ENCODE measurements at regions of chr1 and their contacts with region 1.

Region 1: GRCh38 chr1:204989266-204990058 is 53.5 kb upstream of the CNTN2 start:
- DNase-seq: peak; percentile 85
- ATAC-seq: peak; percentile 87
- H3K4me3 Mint-ChIP-seq: no peak overlapping the region
- H3K27ac Mint-ChIP-seq: no peak overlapping the region
- H3K4me1 Mint-ChIP-seq: peaks cover 35% of the 10 kb centered on the region
- H3K27me3 Mint-ChIP-seq: peaks cover 20% of the 10 kb centered on the region
- CTCF ChIP-seq: peak; percentile 95

Region 2: GRCh38 chr1:204751894-204752687 is 237.4 kb before region 1 on chr1:
- CTCF ChIA-PET with region 1: no interaction called
- POLR2A ChIA-PET with region 1: no interaction called
- DNase-seq: peak; percentile 73
- ATAC-seq: peak; percentile 85
- H3K4me3 Mint-ChIP-seq: 0 out of 2 replicates have a peak overlapping the region, but pooled peaks have one; percentile 25
- H3K27ac Mint-ChIP-seq: no peak overlapping the region
- H3K4me1 Mint-ChIP-seq: peaks cover 24% of the 10 kb centered on the region
- H3K27me3 Mint-ChIP-seq: peaks cover 12% of the 10 kb centered on the region
- CTCF ChIP-seq: no peak

Region 3: DNA sequence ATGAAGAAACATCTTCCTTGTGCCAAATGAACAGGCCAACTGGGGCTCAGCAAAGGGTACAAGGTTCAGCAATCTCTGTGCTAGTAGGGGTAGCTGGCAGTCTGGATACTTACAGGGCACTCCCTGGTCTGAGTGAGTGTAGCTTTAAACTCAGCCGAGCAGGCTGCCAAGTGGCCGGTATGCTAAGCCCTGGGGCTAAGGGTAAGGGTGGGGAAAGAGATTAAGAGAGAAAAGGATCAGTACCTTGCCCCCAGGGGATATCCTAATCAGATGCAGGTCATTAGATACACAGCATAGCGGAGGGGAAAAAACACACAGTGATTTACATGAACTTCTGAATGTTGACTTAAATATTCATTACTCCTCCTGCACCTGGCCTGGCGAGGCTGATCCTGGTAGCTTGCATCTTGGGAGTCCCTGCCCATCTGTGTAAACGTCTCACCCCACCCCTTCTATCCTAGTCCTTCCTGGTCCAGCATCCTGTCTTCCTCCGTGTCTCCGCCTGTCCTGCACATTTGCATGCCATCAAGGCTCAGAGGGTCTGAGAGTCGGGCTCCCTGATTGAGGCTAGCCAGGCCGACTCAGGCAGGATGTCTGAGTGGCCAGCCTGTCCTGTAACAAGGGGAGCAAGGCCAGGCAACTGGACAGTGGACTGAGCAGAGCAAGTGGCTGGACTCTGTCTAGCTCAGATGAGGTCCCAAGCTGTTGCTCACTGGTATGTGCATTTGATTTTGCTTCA is 14.1 kb after region 1 on chr1:
- CTCF ChIA-PET with region 1: interaction called, 20 read pairs
- POLR2A ChIA-PET with region 1: no interaction called
- DNase-seq: no peak
- ATAC-seq: peak; percentile 70
- H3K4me3 Mint-ChIP-seq: no peak overlapping the region
- H3K27ac Mint-ChIP-seq: 0 out of 2 replicates have a peak overlapping the region, but pooled peaks have one; percentile 29
- H3K4me1 Mint-ChIP-seq: peaks cover 23% of the 10 kb centered on the region
- H3K27me3 Mint-ChIP-seq: peaks cover 70% of the 10 kb centered on the region
- CTCF ChIP-seq: no peak

Region 4: GRCh38 chr1:205032508-205032907 is 43.0 kb after region 1 on chr1:
- CTCF ChIA-PET with region 1: interaction called, 32 read pairs
- POLR2A ChIA-PET with region 1: no interaction called
- DNase-seq: no peak
- ATAC-seq: no peak
- H3K4me3 Mint-ChIP-seq: no peak overlapping the region
- H3K27ac Mint-ChIP-seq: no peak overlapping the region
- H3K4me1 Mint-ChIP-seq: peaks cover 5% of the 10 kb centered on the region
- H3K27me3 Mint-ChIP-seq: peaks cover 7% of the 10 kb centered on the region
- CTCF ChIP-seq: no peak

Region 5: DNA sequence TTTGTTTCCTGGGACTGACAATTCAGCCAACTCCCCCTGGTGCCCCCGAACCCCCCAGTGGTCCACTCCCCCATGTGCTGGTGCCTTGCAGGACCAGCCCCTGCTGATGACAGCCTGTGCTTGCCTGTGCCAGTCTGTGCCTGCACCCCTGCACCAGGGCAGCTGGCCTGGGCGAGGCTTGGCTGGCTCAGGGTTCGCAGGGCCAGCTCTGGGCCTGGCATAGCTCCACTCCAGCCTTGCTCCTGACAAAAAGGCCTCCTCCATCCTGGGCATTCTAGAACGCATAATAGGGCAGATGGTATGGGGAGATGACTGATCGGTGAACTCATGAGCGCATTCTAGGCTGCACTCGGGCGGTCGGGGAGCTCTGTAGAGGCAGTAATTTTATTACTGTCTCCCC is 58.9 kb after region 1 on chr1:
- CTCF ChIA-PET with region 1: interaction called, 25 read pairs
- POLR2A ChIA-PET with region 1: no interaction called
- DNase-seq: no peak
- ATAC-seq: no peak
- H3K4me3 Mint-ChIP-seq: no peak overlapping the region
- H3K27ac Mint-ChIP-seq: no peak overlapping the region
- H3K4me1 Mint-ChIP-seq: peaks cover 33% of the 10 kb centered on the region
- H3K27me3 Mint-ChIP-seq: peaks cover 16% of the 10 kb centered on the region
- CTCF ChIP-seq: no peak

Region 6: GRCh38 chr1:205077158-205077933 is 87.9 kb after region 1 on chr1:
- CTCF ChIA-PET with region 1: interaction called, 23 read pairs
- POLR2A ChIA-PET with region 1: no interaction called
- DNase-seq: no peak
- ATAC-seq: no peak
- H3K4me3 Mint-ChIP-seq: no peak overlapping the region
- H3K27ac Mint-ChIP-seq: no peak overlapping the region
- H3K4me1 Mint-ChIP-seq: no peaks in the 10 kb centered on the region
- H3K27me3 Mint-ChIP-seq: no peaks in the 10 kb centered on the region
- CTCF ChIP-seq: no peak

Region 7: DNA sequence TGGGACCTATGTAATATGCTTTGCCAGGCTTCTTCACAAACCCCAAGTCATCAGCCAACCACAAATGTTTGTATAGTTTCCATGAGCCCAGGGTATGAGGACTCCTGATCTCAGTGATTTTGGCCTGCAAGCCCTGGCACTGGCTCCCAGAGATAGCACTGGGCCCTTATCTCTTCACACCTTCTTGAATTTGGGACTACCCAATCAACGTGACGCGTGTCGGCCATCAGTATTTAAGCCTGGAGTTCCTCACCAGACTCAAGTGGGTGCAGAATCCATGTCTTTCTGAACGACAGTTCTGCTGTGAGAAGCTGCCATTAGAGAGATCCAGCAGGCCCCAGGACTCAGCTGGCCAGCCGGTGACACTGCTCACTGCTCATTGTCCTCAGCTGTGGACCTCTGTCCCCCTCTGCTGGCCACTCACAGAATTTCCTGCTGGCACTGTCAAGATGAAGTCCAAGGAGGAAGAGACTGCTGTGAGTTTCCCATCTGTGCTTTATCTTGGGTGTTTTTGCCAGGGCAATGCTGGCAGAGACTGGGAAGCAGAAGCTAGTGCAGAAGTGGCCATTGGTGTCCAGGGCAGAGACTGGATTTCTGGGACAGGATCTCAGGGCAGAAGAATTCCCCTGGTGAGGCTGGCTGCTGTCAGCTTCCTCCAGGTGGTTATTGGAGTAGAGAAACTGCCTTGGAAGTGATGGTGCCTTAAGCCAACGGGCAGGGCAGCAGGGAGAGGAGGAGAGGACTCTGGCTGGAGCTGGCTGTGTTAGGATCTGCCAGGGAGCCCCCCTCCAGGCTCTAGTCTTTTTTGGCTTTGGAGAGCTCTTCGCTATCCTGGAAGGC is 266.7 kb after region 1 on chr1:
- CTCF ChIA-PET with region 1: interaction called, 28 read pairs
- POLR2A ChIA-PET with region 1: no interaction called
- DNase-seq: peak; percentile 93
- ATAC-seq: peak; percentile 90
- H3K4me3 Mint-ChIP-seq: no peak overlapping the region
- H3K27ac Mint-ChIP-seq: 0 out of 2 replicates have a peak overlapping the region, but pooled peaks have one; percentile 83
- H3K4me1 Mint-ChIP-seq: peaks cover 17% of the 10 kb centered on the region
- H3K27me3 Mint-ChIP-seq: no peaks in the 10 kb centered on the region
- CTCF ChIP-seq: peak; percentile 98